ENCODE measurements at regions of chr10 and their contacts with region 1.

Region 1: DNA sequence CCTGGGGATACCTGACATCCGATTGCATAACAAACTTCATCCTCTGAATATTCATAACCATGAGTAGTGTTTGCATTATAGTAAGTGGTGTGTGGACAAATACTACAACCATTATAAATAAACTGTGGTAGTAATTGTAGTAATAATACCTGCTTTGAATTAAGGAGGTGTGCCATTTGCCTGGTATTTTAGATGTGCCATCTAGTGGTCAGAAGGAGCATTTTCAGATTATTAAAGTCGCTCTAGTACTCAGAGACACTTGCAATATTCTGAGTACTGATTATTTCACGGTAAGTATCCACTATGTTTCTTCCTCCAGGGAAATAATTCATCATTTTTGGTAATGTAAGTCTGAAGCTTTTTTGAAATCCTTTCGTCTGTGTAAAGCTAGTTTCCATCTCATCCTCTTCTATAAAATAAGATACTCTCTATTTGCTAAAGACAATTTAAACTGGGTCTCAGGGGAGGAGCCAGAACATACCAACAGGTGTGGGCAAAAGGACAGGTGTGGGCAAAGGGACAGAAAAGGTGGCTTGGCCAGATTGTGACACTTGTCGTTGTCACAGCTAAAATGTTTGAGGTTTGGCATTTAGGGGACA is 115.3 kb upstream of the WDR11 start:
- DNase-seq: no peak
- H3K4me3 ChIP-seq: no peak overlapping the region
- CTCF ChIP-seq: no peak
- POLR2A ChIP-seq: no peak

Region 2: DNA sequence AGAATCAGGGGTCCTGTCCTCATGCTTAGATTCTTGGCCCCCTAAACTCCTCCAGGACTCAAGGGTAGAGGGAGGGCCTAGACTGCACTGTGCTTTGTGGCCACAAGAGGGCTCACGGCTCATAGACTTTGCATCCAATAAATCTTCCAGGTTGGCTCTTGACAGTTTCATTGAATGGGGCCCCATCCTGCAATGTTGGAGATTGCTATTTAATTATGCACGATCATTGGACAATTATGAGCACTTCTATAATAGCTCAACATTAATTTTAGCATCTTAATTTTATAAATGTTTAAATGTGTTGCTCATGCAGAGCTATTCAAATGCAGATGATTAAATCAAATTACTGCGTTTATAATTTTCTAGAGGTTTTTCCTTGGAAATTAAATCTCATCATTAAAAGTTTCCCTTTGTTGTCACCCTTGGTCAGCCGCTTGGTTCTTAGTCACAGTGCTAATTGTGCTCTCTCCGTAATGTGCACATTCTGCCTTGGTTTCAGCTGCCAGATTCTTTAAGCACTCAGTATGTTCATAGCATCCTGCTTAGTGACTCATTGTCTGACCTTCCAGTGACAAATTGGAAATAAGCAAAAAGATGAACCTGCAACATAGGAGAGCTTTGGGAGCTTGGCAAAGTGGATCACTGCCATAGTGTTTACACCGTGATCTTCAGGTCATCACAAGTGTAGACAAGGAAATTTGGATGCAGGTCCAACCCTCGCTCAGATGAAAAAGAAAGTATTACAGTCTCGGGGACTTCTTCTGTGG is 312.3 kb before region 1 on chr10:
- intact Hi-C with region 1: loop called (anchors 10 kb)
- DNase-seq: peak in 1 of 2 donors; percentile 20
- H3K4me3 ChIP-seq: no peak overlapping the region
- CTCF ChIP-seq: no peak
- POLR2A ChIP-seq: no peak

Region 3: DNA sequence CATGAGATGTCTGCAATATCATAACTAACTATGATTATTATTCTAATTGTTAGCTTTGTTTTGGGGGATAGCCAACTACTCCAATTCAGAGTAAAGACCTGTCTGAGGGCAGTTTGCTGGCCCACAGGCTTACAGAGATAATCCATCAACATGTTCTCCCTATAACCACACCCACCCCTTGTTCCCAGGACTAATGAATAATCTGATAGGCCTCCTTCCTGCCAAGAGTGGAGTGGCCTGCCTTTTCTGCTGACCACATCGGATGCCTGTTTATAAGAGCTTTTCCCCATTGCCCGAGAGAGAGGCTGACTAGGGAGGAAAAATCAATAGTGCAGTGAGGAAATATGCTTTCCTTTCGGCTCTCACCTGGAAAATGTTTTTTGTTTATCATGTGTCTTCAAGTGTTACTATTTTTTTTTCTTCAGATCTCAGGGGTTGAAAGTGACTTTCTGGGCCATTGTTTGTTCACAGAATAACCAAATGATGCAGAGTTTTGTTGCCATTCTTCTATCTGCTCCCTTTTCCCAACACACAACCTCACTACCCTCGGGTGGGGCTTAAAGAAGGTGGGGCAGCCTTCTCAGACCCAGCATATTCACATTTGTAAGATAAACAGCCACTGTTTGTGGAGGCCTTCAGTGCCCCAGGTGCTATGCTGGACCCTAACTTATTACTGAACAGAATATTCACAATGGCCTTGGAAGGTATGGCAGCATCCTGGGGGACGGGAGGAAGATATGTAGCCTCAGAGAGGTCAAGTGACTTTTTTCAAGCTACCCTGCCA is 240.5 kb before region 1 on chr10:
- intact Hi-C with region 1: no loop called
- DNase-seq: peak in 1 of 2 donors; percentile 28
- H3K4me3 ChIP-seq: no peak overlapping the region
- CTCF ChIP-seq: no peak
- POLR2A ChIP-seq: no peak

Region 4: GRCh38 chr10:120667276-120667675 is 68.6 kb before region 1 on chr10:
- intact Hi-C with region 1: no loop called
- DNase-seq: no peak
- H3K4me3 ChIP-seq: no peak overlapping the region
- CTCF ChIP-seq: no peak
- POLR2A ChIP-seq: no peak

Region 5: DNA sequence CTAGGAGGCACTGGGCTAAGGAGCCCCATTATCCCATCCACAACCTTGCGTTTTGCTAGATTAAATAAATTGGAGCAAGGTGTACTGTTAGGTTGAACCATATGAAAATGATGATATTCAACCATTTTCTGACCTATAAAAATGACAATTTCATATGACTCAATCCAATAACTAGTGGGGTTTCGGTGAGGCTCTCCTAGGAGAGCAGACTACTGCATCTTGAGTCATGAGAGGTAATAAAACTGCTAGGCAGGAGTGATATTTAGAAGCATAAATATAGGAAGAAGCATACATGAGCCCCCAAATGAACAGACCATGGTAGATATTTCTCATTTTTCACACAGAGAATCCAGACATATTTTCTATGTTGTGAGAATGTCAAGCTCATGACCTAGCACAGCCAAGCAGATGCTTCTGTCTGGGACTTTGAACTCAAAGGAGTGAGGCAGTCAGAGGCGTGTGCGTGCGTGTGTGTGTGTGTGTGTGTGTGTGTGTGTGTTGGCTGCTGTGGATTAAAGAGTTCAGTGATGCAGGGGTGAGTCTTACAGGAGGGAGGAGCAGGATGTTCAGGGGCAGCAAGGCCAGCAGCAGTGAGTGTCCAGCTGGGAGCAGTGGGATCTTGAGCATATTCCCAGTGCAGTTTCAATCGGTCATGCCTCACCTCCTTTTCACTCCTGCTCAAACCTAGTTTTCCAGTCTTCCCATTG is 97.5 kb after region 1 on chr10:
- intact Hi-C with region 1: no loop called
- DNase-seq: no peak
- H3K4me3 ChIP-seq: no peak overlapping the region
- CTCF ChIP-seq: no peak
- POLR2A ChIP-seq: no peak

Measured in lower leg skin (tissue), 4 donors.